ENCODE measurements at regions of chr11 and their contacts with region 1.

Region 1: GRCh38 chr11:128890543-128891368 is at the start of gene KCNJ5:
- DNase-seq: no peak
- ATAC-seq: peak; percentile 28
- H3K4me3 Mint-ChIP-seq: peak within 1 kb of the TSS; percentile 75
- H3K27ac Mint-ChIP-seq: no peak within 1 kb of the TSS
- H3K4me1 Mint-ChIP-seq: peaks cover 26% of the 10 kb centered on the region
- H3K27me3 Mint-ChIP-seq: peaks cover 68% of the 10 kb centered on the region
- CTCF ChIP-seq: no peak
- total RNA-seq, gene KCNJ5: not detected in 2 replicates

Region 2: DNA sequence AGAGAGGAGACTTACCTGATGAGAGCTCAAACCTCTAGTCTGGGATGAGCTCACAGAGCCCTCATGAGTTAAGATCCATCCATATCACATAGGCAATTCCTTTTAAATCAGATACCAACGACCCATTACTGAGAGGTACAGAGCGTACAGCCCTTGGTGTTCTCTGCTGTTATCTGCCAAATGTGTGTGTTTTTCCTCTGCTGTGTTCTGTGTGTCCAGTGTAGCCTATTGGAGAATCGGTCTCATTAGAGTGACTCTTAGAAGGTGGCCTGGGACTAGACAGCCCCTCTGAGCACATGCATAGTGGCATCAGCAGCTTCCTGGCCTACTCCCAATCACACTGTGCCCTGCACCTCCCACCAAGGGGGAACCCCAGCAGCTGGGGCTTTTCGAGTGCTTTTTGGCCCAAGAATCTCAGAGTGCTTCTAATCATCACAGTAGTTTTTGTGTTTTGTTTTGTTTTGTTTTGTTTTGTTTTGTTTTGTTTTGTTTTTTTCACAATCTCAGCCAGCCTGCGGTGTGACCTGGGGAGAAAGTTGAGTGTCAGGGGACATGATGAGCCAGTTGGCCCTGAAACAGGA is 26.5 kb after region 1 on chr11:
- CTCF ChIA-PET with region 1: no interaction called
- POLR2A ChIA-PET with region 1: no interaction called
- intact Hi-C with region 1: no loop called
- DNase-seq: no peak
- ATAC-seq: no peak
- H3K4me3 Mint-ChIP-seq: no peak overlapping the region
- H3K27ac Mint-ChIP-seq: no peak overlapping the region
- H3K4me1 Mint-ChIP-seq: peaks cover 4% of the 10 kb centered on the region
- H3K27me3 Mint-ChIP-seq: peaks cover 42% of the 10 kb centered on the region
- CTCF ChIP-seq: no peak

Region 3: DNA sequence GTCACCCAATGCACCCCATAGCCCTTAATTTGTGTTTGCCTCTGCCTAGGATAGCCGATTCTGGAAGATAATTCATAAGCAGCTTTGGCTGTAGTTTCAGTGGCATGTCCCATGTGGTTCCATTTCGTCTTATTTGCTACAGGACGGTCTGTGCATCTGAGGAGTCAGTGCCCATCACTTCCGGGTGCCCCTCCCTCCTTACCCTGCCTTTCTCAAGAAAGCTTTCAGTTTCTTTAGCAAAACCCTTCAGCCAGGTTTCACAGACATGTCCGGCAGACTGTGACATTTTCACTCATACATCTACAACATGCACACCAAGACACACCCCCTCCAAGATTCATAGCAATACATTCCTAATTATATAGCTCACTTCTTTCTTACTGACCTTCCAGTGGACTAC is 37.6 kb after region 1 on chr11:
- CTCF ChIA-PET with region 1: no interaction called
- POLR2A ChIA-PET with region 1: no interaction called
- intact Hi-C with region 1: loop called (anchors 5 kb)
- DNase-seq: no peak
- ATAC-seq: peak; percentile 85
- H3K4me3 Mint-ChIP-seq: peak overlapping the region; percentile 6
- H3K27ac Mint-ChIP-seq: no peak overlapping the region
- H3K4me1 Mint-ChIP-seq: peaks cover 17% of the 10 kb centered on the region
- H3K27me3 Mint-ChIP-seq: peaks cover 10% of the 10 kb centered on the region
- CTCF ChIP-seq: no peak

Measured in activated B cell treated with CpG ODN at 0.5 μM for 24 hours (primary cell).